Mammary epithelial cell (primary cell): ENCODE measurements at regions of chr17 and their contacts with region 1.

Region 1: DNA sequence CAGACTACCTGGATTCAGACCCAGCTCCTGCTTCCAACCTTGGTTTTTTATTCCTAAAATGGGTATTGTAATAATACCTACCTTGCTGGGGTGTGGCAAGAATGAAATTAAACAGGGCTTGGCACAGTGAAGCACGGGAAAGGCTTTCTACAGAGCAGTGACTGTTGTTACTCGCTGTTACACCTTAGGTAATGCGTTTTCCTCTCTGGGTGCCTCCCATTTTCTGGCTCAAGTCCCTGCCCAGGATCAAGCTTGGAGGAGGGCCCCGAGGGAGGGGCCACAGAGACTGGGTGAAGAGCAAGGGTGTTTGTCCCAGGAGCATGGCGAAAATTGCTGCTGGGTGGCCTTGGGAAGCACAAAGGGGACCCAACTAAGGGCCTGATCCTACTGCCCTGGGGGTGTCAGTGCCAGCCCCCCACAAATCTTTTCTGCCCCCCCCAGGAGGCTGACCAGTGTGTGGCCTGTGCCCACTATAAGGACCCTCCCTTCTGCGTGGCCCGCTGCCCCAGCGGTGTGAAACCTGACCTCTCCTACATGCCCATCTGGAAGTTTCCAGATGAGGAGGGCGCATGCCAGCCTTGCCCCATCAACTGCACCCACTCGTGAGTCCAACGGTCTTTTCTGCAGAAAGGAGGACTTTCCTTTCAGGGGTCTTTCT is 13.3 kb downstream of the MIEN1 start:
- DNase-seq: peak; percentile 32
- H3K4me3 ChIP-seq: no peak overlapping the region
- H3K27ac ChIP-seq: no peak overlapping the region
- H3K4me1 ChIP-seq: peaks cover 6% of the 10 kb centered on the region
- H3K27me3 ChIP-seq: no peaks in the 10 kb centered on the region
- CTCF ChIP-seq: no peak

Region 2: GRCh38 chr17:39671651-39672521 is 45.1 kb before region 1 on chr17:
- CTCF ChIA-PET with region 1: no interaction called
- dilution Hi-C with region 1: loop called (anchors 5 kb)
- in situ Hi-C with region 1: no loop called
- intact Hi-C with region 1: no loop called
- DNase-seq: peak; percentile 15
- H3K4me3 ChIP-seq: no peak overlapping the region
- H3K27ac ChIP-seq: no peak overlapping the region
- H3K4me1 ChIP-seq: peaks cover 8% of the 10 kb centered on the region
- H3K27me3 ChIP-seq: no peaks in the 10 kb centered on the region
- CTCF ChIP-seq: peak; percentile 22 to 56

Region 3: DNA sequence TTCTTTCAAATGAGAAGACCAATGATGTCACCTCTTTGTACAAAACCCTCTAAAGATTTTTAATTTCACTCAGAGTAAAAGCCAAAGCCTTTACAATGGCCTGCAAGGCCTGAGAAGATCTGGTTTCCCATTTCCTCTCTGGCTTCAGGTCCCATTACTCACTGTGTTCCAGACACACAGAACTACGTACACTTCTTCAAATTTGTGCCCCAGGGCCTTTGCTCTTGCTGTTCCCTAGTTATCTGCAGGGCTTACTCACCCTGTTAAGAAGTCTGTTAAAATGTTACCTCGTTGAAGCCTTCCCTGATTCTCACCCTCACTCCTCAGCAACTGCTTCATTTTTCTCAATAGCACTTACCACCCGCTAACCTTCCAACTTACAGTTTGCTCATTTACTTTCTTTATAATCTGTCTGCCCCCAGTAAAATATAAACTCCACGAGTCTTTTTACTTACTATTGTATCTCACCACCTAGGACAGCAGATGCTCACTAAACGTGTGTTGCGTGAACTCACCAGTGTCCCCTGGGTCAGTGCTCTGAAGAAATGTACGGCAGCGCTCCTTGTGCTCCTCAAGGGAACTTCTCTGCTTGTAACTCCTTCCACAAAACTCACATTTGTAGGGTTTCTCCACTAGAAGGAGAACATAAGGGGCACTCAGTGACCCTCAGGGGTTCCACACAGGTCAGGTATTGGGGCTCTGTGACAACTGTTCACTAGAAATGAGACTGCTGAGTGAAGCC is 70.9 kb after region 1 on chr17:
- CTCF ChIA-PET with region 1: no interaction called
- dilution Hi-C with region 1: loop called (anchors 5 kb)
- in situ Hi-C with region 1: no loop called
- intact Hi-C with region 1: no loop called
- DNase-seq: peak; percentile 64
- H3K4me3 ChIP-seq: no peak overlapping the region
- H3K27ac ChIP-seq: no peak overlapping the region
- H3K4me1 ChIP-seq: peaks cover 11% of the 10 kb centered on the region
- H3K27me3 ChIP-seq: peaks cover 9% of the 10 kb centered on the region
- CTCF ChIP-seq: no peak